ENCODE measurements at regions of chr4 and their contacts with region 1.

Region 1: GRCh38 chr4:128454281-128455075 is 166.9 kb upstream of the PGRMC2 start:
- DNase-seq: peak; percentile 32 to 87 (median 78)
- H3K4me3 ChIP-seq: peak overlapping the region in 21 of 59 donors; percentile 2 to 39 (median 24)
- H3K27ac ChIP-seq: peak overlapping the region in 3 of 59 donors; percentile 29 to 59 (median 30)
- H3K27me3 ChIP-seq: no peaks in the 10 kb centered on the region
- CTCF ChIP-seq: peak; percentile 42 to 83 (median 75)

Region 2: GRCh38 chr4:128565565-128566186 is 111.2 kb after region 1 on chr4:
- intact Hi-C with region 1: loop called in 1 of 2 experiments (anchors 5 kb)
- DNase-seq: peak in 5 of 10 donors; percentile 13 to 54 (median 48)
- H3K4me3 ChIP-seq: no peak overlapping the region
- H3K27ac ChIP-seq: no peak overlapping the region
- H3K27me3 ChIP-seq: peaks cover 0 to 3% (median 0%) of the 10 kb centered on the region in 45 donors
- CTCF ChIP-seq: peak in 52 of 56 donors; percentile 21 to 72 (median 49)

Region 3: DNA sequence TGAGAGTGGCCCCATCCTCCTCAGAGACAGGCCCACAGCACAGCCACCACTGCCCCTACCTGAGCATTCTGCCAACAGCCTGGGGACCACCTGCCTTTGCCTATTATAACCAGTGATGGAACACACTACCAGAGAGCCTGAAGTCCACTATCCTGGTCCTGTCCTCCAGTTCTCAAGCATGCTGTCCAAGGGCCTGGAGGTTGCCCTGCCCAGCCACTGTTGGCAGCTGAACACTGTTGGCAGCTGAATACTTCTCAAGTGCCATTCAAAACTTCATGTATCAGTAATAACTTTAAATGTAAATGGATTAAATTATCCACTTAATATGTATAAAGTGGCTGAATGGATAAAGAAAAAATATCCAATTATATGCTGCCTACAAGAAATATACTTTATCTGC is 160.7 kb after region 1 on chr4:
- intact Hi-C with region 1: no loop called
- DNase-seq: no peak
- H3K4me3 ChIP-seq: no peak overlapping the region
- H3K27ac ChIP-seq: no peak overlapping the region
- H3K27me3 ChIP-seq: no peaks in the 10 kb centered on the region
- CTCF ChIP-seq: no peak

Region 4: GRCh38 chr4:128663336-128663735 is 208.9 kb after region 1 on chr4:
- intact Hi-C with region 1: no loop called
- DNase-seq: no peak
- H3K4me3 ChIP-seq: no peak overlapping the region
- H3K27ac ChIP-seq: no peak overlapping the region
- H3K27me3 ChIP-seq: no peaks in the 10 kb centered on the region
- CTCF ChIP-seq: no peak